ENCODE measurements at regions of chr1 and their contacts with region 1.

Region 1: DNA sequence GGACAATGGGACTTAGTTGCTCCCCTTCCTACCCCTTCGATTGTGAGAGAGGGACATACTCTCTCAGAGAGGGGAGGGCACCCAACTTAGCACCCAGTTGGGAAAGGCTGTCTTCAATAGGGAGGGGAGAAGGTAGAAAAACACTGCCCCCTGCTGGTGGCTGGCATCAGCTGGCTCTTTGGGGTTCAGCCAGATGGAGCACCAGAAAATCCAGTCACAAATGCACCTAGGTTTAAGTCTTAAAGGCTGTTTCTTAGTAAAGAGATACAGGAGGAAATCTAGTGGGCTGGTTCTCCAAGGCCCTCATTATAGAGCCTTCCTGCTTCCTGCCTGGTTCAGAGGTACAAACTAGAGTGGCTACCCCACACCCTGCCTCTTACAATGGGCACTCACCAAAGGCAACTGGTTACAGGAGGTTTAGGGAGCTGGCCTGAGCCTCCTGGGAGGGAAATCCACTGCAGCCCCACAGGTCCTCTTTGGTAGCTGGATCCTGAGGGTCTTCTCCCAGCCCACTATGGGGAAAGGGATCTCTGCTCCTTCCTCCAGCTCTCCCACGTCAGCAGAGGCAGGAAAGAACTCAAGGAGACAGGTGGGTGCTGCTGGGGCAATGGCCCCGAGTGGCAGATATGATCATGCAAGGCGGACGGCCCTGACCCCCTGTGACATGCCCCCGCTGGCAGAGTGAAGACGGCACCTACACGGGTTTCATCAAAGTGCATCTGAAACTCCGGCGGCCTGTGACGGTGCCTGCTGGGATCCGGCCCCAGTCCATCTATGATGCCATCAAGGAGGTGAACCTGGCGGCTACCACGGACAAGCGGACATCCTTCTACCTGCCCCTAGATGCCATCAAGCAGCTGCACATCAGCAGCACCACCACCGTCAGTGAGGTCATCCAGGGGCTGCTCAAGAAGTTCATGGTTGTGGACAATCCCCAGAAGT is 28.3 kb downstream of the EIF2D start:
- DNase-seq: peak; percentile 73 to 94 (median 86)

Region 2: GRCh38 chr1:206489980-206490770 is 93.8 kb before region 1 on chr1:
- intact Hi-C with region 1: loop called (anchors 5 kb)
- DNase-seq: peak in 41 of 42 donors; percentile 49 to 89 (median 73)

Region 3: DNA sequence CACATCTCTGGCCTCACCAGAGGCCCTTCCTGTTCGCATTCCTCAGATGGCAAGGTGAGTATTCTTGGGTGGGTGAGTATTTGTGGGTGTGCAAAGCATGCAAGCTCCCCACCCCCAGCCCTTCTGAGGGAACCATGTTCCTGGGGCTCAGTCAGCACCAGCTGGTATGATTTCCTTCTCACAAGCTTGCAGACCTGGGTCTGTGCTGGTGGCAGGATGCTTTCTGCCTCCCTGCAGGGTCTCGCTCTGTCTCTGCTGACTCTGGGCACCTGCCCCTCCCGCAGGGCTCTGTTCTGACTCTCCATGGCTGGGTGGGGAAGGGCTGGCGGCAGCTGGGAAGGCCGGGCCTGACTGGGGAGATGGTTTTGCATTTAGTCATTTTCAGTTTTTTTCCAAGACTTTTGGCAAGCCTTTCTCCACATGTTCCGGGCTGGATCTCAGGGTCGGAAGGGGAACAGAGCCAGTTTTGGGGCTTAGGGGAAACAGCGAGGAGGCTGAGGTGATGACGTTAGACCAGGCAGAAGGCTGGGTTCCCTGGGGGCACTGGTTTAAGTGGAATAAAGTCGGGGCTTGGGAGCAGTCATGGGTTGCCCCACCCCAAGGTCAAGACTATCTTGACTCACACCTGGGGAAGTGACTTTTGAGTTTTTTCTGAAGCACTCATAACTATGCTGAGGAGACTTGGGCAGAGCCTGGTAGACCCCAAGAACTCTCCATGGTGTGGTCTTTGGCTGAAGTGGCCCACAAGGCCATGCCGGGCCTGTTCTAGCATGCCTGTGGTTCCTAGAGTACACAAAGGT is 70.5 kb before region 1 on chr1:
- intact Hi-C with region 1: no loop called
- DNase-seq: no peak

Region 4: GRCh38 chr1:206544562-206545257 is 39.3 kb before region 1 on chr1:
- intact Hi-C with region 1: loop called (anchors 5 kb)
- DNase-seq: peak; percentile 47 to 90 (median 72)

Region 5: GRCh38 chr1:206716870-206717673 is 133.1 kb after region 1 on chr1:
- intact Hi-C with region 1: no loop called
- DNase-seq: peak in 3 of 42 donors; percentile 19 to 45 (median 21)

Measured in head of caudate nucleus (tissue), 42 donors.